ENCODE measurements at regions of chr17 and their contacts with region 1.

Region 1: DNA sequence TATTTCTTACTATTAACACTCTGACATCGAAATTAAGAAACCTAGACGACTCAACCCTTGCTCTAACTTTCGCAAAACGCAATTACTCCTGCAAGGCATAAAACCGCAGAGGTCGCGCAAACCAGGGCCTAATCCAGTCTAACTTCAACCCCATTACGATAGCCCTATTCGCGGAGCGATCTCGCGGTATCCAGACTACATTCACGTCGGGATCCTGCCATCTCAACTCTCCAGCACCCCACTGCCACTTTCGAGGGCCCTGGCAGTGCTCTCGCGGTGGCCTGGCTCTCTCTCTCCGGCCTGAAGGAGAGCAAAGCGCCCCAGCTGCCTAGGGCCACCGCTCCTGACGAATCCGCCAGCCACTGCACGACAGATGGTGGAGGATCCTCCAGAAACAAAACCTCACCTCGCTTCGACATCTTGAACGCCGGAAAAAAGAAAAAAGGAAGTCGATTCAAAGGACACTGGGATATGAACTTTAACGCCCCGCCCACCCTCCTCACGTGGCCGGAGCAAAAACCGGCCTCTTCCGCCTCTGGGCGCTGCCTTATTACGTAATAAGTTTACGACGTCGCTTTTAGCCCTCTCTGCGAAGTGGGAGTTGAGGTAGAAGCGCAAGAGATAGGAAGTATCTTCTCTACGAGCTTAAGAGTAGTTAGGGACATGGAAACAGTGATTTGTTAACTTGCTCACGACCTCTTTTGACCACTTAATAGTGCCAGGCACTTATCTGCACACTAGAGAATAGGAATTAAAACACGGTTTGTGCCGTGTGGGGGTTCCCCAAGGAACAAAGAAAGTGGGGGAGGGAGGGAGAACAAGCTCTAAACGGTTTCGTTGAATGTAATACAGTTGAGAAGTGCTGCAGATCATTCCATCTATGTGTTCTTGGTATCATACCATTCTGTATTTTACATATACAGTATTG is at the start of gene RPL23:
- DNase-seq: peak; percentile 95 to 96
- H3K4me3 ChIP-seq: peak within 1 kb of the TSS; percentile 62
- H3K4me3 Mint-ChIP-seq: peak within 1 kb of the TSS; percentile 100
- H3K27ac Mint-ChIP-seq: peak within 1 kb of the TSS; percentile 100
- H3K4me1 ChIP-seq: peaks cover 10% of the 10 kb centered on the region; the same call in 1 of the 2 replicates
- H3K4me1 Mint-ChIP-seq: peaks cover 22% of the 10 kb centered on the region
- H3K27me3 ChIP-seq: no peaks in the 10 kb centered on the region
- H3K27me3 Mint-ChIP-seq: no peaks in the 10 kb centered on the region
- CTCF ChIP-seq: no peak
- total RNA-seq, gene RPL23: 2,216 and 2,327 TPM in 2 replicates

Region 2: DNA sequence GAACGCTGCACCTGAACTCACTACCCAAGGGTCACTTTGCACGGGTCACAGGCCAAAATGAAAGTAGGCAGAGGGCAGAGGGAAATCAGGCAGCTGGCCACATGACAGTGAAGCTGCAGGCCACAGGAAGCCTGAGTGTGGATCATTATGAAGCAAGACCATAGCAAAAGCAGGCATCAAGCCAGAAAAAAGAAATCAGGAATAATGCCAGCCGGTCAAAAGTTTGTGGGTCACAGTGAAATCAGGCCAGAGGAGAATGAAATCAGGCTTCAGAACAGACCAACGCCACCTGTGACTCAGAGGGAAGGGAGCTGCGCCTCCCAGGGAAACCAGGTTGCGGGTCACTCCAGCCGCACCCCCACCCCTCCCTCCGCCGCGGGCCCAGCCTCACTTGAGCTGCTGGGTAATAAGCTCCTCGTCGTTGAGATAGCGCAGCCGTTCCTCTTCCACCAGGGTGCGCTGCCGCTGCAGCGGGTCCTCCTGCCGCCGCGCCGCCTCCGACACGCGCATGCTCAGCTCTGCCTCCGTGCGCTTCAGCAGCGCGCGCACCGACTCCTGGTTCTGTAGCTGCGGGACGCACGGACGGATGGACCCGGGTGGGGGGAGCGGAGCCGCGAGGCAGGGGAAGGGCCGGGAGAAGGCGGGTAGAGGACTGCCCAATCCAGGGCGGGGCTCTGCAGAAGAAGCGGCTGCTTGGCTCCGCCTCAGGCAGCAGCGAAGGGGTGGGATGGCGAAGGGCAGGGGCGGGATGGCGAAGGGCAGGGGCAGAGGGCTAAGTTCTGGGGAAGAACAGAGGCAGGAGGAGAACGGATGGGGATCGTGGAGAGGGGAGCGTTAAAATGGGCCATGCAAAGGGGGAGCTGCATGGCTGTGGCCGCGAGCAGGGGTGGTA is 295.5 kb before region 1 on chr17:
- CTCF ChIA-PET with region 1: no interaction called
- POLR2A ChIA-PET with region 1: no interaction called
- intact Hi-C with region 1: no loop called
- DNase-seq: peak; percentile 93 to 95
- H3K4me3 ChIP-seq: peak overlapping the region; percentile 56
- H3K4me3 Mint-ChIP-seq: peak overlapping the region; percentile 81
- H3K27ac Mint-ChIP-seq: no peak overlapping the region
- H3K4me1 ChIP-seq: peaks cover 13% of the 10 kb centered on the region
- H3K4me1 Mint-ChIP-seq: no peaks in the 10 kb centered on the region
- H3K27me3 ChIP-seq: no peaks in the 10 kb centered on the region
- H3K27me3 Mint-ChIP-seq: no peaks in the 10 kb centered on the region
- CTCF ChIP-seq: peak; percentile 90 to 96

Region 3: GRCh38 chr17:38719943-38720641 is 133.5 kb before region 1 on chr17:
- CTCF ChIA-PET with region 1: no interaction called
- POLR2A ChIA-PET with region 1: no interaction called
- intact Hi-C with region 1: no loop called
- DNase-seq: peak in 1 of 2 experiments; percentile 65
- H3K4me3 ChIP-seq: no peak overlapping the region
- H3K4me3 Mint-ChIP-seq: peak overlapping the region; percentile 64
- H3K27ac Mint-ChIP-seq: peak overlapping the region; percentile 60
- H3K4me1 ChIP-seq: peaks cover 7% of the 10 kb centered on the region; the same call in 1 of the 2 replicates
- H3K4me1 Mint-ChIP-seq: peaks cover 14% of the 10 kb centered on the region
- H3K27me3 ChIP-seq: no peaks in the 10 kb centered on the region
- H3K27me3 Mint-ChIP-seq: no peaks in the 10 kb centered on the region
- CTCF ChIP-seq: no peak

Region 4: GRCh38 chr17:38824899-38825761 is 28.4 kb before region 1 on chr17 and contains the start of gene CWC25:
- CTCF ChIA-PET with region 1: interaction called, 3 read pairs
- POLR2A ChIA-PET with region 1: interaction called, 18 read pairs
- intact Hi-C with region 1: loop called (anchors 1 kb)
- DNase-seq: peak; percentile 97 to 98
- H3K4me3 ChIP-seq: peak within 1 kb of the TSS; percentile 86
- H3K4me3 Mint-ChIP-seq: peak within 1 kb of the TSS; percentile 98
- H3K27ac Mint-ChIP-seq: peak within 1 kb of the TSS; percentile 100
- H3K4me1 ChIP-seq: peaks cover 9% of the 10 kb centered on the region
- H3K4me1 Mint-ChIP-seq: no peaks in the 10 kb centered on the region
- H3K27me3 ChIP-seq: no peaks in the 10 kb centered on the region
- H3K27me3 Mint-ChIP-seq: no peaks in the 10 kb centered on the region
- CTCF ChIP-seq: no peak
- total RNA-seq, gene CWC25: 18.2 and 19.1 TPM in 2 replicates

Region 5: DNA sequence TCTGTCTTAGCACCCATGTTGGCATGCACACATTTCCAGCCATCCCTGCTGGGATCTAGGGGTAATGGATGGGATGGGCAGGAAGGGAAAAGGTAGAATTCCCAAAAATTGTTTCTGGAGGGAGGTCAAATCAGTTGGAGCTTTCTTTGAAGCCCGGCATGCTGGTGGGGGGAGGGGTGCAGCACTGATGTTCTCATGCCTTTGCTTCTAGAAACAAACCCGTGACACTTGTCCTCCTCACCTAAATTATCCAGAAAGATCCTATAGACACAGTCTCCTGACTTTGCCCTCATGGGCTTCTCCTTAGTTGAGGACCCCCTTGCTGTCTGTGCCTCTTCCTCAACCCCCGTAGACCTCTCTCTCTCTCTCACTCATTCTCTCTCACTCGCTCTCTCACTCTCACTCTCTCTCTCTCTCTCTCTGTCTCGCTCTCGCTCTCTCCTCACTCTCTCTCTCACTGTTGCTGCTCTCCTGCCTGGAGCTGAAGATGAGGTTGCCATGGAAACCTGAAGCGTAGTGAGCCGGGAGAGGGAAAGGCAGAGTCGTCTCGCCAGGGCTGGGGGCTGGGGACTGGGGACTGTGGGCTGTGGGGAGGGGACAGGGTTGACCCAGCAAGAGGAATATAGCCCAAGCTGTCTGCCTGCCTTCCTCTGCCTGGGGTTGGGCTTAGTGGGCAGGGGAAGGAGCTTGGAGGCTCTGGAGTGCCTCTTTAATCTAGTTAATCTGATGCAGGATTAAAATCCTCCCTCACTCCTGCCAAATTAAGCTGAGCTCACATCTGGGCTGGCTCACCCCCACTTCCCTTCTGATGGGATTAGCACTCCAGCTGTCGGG is 32.4 kb after region 1 on chr17:
- CTCF ChIA-PET with region 1: no interaction called
- POLR2A ChIA-PET with region 1: interaction called, 10 read pairs
- intact Hi-C with region 1: no loop called
- DNase-seq: peak in 1 of 2 experiments; percentile 51
- H3K4me3 ChIP-seq: no peak overlapping the region
- H3K4me3 Mint-ChIP-seq: peak overlapping the region; percentile 2
- H3K27ac Mint-ChIP-seq: peak overlapping the region; percentile 19
- H3K4me1 ChIP-seq: peaks cover 37% of the 10 kb centered on the region
- H3K4me1 Mint-ChIP-seq: peaks cover 24% of the 10 kb centered on the region
- H3K27me3 ChIP-seq: no peaks in the 10 kb centered on the region
- H3K27me3 Mint-ChIP-seq: no peaks in the 10 kb centered on the region
- CTCF ChIP-seq: no peak

Region 6: DNA sequence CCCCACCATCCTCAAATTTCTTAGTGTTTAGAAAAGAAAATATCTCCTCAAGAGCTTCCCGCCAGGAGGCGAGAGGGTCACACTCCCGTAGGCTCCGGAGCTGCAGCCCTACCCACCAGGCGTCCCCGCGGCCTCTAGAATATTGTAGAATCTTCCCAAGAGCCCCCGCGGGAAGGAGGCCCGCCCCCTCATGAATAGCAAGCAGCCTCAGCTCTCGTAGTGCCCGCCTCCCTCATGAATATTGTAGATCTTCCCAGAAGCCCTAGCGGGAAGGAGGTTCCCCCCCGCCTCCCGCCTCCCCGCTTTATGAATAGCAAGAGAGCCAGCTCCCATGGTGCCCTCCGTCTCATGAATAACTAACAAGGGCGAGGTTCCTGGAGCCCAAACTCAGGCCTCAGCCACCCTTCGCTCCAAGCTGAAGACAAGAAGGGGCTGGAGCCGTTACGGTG is 113.8 kb after region 1 on chr17 and contains the start of gene FBXO47:
- CTCF ChIA-PET with region 1: no interaction called
- POLR2A ChIA-PET with region 1: interaction called, 13 read pairs
- intact Hi-C with region 1: no loop called
- DNase-seq: peak; percentile 95 to 98
- H3K4me3 ChIP-seq: peak within 1 kb of the TSS; percentile 46
- H3K4me3 Mint-ChIP-seq: peak within 1 kb of the TSS; percentile 80
- H3K27ac Mint-ChIP-seq: peak within 1 kb of the TSS; percentile 84
- H3K4me1 ChIP-seq: no peaks in the 10 kb centered on the region
- H3K4me1 Mint-ChIP-seq: peaks cover 5% of the 10 kb centered on the region
- H3K27me3 ChIP-seq: no peaks in the 10 kb centered on the region
- H3K27me3 Mint-ChIP-seq: no peaks in the 10 kb centered on the region
- CTCF ChIP-seq: peak in 1 of 2 experiments; percentile 53
- total RNA-seq, gene FBXO47: not detected in 2 replicates

Region 7: GRCh38 chr17:39225959-39226683 is 372.6 kb after region 1 on chr17:
- CTCF ChIA-PET with region 1: no interaction called
- POLR2A ChIA-PET with region 1: no interaction called
- intact Hi-C with region 1: no loop called
- DNase-seq: peak; percentile 78 to 83
- H3K4me3 ChIP-seq: peak overlapping the region; percentile 26
- H3K4me3 Mint-ChIP-seq: peak overlapping the region; percentile 74
- H3K27ac Mint-ChIP-seq: no peak overlapping the region
- H3K4me1 ChIP-seq: no peaks in the 10 kb centered on the region
- H3K4me1 Mint-ChIP-seq: no peaks in the 10 kb centered on the region
- H3K27me3 ChIP-seq: peaks cover 2% of the 10 kb centered on the region
- H3K27me3 Mint-ChIP-seq: peaks cover 10% of the 10 kb centered on the region
- CTCF ChIP-seq: no peak

Region 8: GRCh38 chr17:39352511-39352910 is 499.0 kb after region 1 on chr17:
- CTCF ChIA-PET with region 1: no interaction called
- POLR2A ChIA-PET with region 1: no interaction called
- intact Hi-C with region 1: no loop called
- DNase-seq: no peak
- H3K4me3 ChIP-seq: no peak overlapping the region
- H3K4me3 Mint-ChIP-seq: no peak overlapping the region
- H3K27ac Mint-ChIP-seq: no peak overlapping the region
- H3K4me1 ChIP-seq: no peaks in the 10 kb centered on the region
- H3K4me1 Mint-ChIP-seq: no peaks in the 10 kb centered on the region
- H3K27me3 ChIP-seq: no peaks in the 10 kb centered on the region
- H3K27me3 Mint-ChIP-seq: no peaks in the 10 kb centered on the region
- CTCF ChIP-seq: no peak